ENCODE measurements at regions of chr1 and their contacts with region 1.

Region 1: DNA sequence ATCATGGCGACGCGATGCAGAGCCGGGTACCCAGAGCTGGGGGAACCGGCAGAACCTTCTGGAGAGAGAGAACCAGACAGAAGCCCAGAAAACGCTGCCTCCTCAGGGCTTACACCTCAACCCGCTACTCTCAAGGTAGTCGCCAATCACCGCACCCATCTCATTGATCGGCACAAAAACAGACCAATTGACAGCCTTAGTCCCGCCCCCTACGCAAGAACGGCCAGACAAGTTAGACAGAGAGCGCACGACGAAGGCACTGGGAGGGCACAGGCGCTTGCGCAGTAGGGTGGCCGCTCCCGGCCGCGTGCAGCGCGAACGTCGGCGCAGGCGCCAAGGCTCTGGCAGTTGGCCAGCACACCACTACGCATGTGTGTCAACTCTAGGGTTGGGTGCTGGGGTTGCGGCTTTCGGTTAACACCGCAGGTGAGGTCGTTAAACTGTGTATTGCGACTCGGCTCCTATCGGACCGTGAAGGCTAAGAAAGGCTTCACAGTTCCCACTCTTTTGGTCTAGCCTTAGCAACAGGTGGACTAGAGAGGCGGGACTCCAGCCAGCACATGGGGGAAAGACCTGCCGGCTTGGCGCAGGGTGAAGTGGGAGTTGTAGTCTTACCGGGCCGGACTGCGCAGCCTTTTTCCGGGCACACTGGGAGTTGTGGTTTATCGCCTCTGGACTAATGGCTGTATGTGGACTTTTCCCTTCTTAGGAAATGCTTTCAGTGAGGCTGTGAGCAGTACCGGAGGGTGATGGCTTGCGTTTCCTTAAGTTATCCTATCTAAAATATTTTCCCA is at the starts of genes CCT3 and TSACC:
- DNase-seq: peak; percentile 99 to 100 (median 100)
- ATAC-seq: peak; percentile 97
- H3K4me3 ChIP-seq: peak within 1 kb of the TSS; percentile 83
- H3K4me3 Mint-ChIP-seq: peak within 1 kb of the TSS; percentile 97 to 99 (median 99)
- H3K27ac ChIP-seq: peak within 1 kb of the TSS; percentile 76
- H3K27ac Mint-ChIP-seq: peak within 1 kb of the TSS; percentile 97 to 99 (median 98)
- H3K4me1 ChIP-seq: peaks cover 11 to 17% of the 10 kb centered on the region in 2 donors
- H3K4me1 Mint-ChIP-seq: peaks cover 16 to 49% (median 40%) of the 10 kb centered on the region in 7 donors
- H3K27me3 ChIP-seq: no peaks in the 10 kb centered on the region
- H3K27me3 Mint-ChIP-seq: peaks cover 0 to 12% (median 0%) of the 10 kb centered on the region in 5 donors
- total RNA-seq, gene CCT3: 78.0 to 282 (median 114) TPM
- total RNA-seq, gene TSACC: 1.1 TPM in 1 of 5 experiments, not detected in the others

Region 2: DNA sequence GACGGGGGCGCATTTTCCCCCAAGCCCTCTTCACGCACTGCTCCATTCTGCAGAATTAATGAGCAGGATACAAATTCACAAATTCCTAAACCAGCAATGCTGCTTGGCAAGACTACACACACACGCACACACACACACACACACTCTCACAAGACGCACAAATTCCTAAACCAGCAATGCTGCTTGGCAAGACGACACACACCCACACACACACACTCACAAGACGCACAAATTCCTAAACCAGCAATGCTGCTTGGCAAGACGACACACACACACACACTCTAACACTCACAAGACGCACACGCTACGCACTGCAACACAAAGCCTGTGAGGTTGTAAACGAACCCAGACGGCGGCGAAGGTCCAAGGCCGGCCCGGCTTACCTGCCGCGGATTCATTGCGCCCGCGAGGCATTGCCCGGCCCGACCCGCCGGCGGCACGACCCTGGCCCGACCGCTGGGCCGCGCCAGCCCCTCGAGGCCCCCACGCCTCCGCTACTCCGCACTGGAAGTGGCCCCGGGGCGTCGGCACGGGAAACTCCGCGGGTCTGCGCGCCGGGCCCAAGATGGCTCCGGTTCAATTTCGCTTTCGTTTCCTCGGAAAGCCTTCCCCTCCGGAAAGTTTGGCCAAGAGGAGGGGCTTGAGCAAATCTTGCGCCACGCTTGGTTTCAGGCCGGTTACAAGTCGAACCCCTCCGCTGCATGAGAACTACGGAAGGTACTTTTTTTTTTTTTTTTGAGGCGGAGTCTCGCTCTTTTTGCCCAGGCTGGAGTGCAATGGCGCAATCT is 1730.6 kb before region 1 on chr1 and contains the start of gene ADAR:
- CTCF ChIA-PET with region 1: no interaction called
- POLR2A ChIA-PET with region 1: no interaction called
- intact Hi-C with region 1: loop called in 1 of 2 experiments (anchors 2 kb)
- DNase-seq: peak; percentile 67 to 95 (median 90)
- ATAC-seq: peak; percentile 92
- H3K4me3 ChIP-seq: peak within 1 kb of the TSS; percentile 78
- H3K4me3 Mint-ChIP-seq: peak within 1 kb of the TSS; percentile 91 to 100 (median 98)
- H3K27ac ChIP-seq: peak within 1 kb of the TSS; percentile 97
- H3K27ac Mint-ChIP-seq: peak within 1 kb of the TSS; percentile 94 to 99 (median 99)
- H3K4me1 ChIP-seq: peaks cover 40 to 42% of the 10 kb centered on the region in 2 donors
- H3K4me1 Mint-ChIP-seq: peaks cover 63 to 90% (median 75%) of the 10 kb centered on the region in 7 donors
- H3K27me3 ChIP-seq: no peaks in the 10 kb centered on the region
- H3K27me3 Mint-ChIP-seq: no peaks in the 10 kb centered on the region
- total RNA-seq, gene ADAR: 206 to 408 (median 237) TPM

Region 3: GRCh38 chr1:156082309-156083091 is 255.9 kb before region 1 on chr1 and contains the start of gene MEX3A:
- CTCF ChIA-PET with region 1: no interaction called
- POLR2A ChIA-PET with region 1: no interaction called
- intact Hi-C with region 1: loop called in 1 of 2 experiments (anchors 1 kb)
- DNase-seq: peak; percentile 35 to 70 (median 52)
- ATAC-seq: peak; percentile 90
- H3K4me3 ChIP-seq: peak within 1 kb of the TSS; percentile 83
- H3K4me3 Mint-ChIP-seq: peak within 1 kb of the TSS; percentile 73 to 91 (median 85)
- H3K27ac ChIP-seq: peak within 1 kb of the TSS; percentile 15
- H3K27ac Mint-ChIP-seq: peak within 1 kb of the TSS in 4 of 9 donors; percentile 8 to 54 (median 31)
- H3K4me1 ChIP-seq: peaks cover 3 to 5% of the 10 kb centered on the region in 2 donors
- H3K4me1 Mint-ChIP-seq: peaks cover 0 to 17% (median 6%) of the 10 kb centered on the region in 7 donors
- H3K27me3 ChIP-seq: peaks cover 3 to 9% of the 10 kb centered on the region in 2 donors
- H3K27me3 Mint-ChIP-seq: peaks cover 26 to 89% (median 29%) of the 10 kb centered on the region in 5 donors
- total RNA-seq, gene MEX3A: 0.05 to 0.15 (median 0.13) TPM in 4 of 5 experiments, not detected in the other

Region 4: GRCh38 chr1:156282479-156283222 is 55.7 kb before region 1 on chr1 and contains the start of gene SMG5:
- CTCF ChIA-PET with region 1: interaction called, 3 read pairs
- POLR2A ChIA-PET with region 1: interaction called, 5 read pairs
- intact Hi-C with region 1: loop called (anchors 1 to 2 kb)
- DNase-seq: peak; percentile 89 to 98 (median 96)
- ATAC-seq: peak; percentile 95
- H3K4me3 ChIP-seq: peak within 1 kb of the TSS; percentile 93
- H3K4me3 Mint-ChIP-seq: peak within 1 kb of the TSS; percentile 85 to 99 (median 94)
- H3K27ac ChIP-seq: peak within 1 kb of the TSS; percentile 89
- H3K27ac Mint-ChIP-seq: peak within 1 kb of the TSS; percentile 89 to 98 (median 95)
- H3K4me1 ChIP-seq: peaks cover 15 to 22% of the 10 kb centered on the region in 2 donors
- H3K4me1 Mint-ChIP-seq: peaks cover 29 to 51% (median 39%) of the 10 kb centered on the region in 7 donors
- H3K27me3 ChIP-seq: no peaks in the 10 kb centered on the region
- H3K27me3 Mint-ChIP-seq: peaks cover 0 to 3% (median 0%) of the 10 kb centered on the region in 5 donors
- total RNA-seq, gene SMG5: 65.7 to 74.0 (median 69.4) TPM

Region 5: DNA sequence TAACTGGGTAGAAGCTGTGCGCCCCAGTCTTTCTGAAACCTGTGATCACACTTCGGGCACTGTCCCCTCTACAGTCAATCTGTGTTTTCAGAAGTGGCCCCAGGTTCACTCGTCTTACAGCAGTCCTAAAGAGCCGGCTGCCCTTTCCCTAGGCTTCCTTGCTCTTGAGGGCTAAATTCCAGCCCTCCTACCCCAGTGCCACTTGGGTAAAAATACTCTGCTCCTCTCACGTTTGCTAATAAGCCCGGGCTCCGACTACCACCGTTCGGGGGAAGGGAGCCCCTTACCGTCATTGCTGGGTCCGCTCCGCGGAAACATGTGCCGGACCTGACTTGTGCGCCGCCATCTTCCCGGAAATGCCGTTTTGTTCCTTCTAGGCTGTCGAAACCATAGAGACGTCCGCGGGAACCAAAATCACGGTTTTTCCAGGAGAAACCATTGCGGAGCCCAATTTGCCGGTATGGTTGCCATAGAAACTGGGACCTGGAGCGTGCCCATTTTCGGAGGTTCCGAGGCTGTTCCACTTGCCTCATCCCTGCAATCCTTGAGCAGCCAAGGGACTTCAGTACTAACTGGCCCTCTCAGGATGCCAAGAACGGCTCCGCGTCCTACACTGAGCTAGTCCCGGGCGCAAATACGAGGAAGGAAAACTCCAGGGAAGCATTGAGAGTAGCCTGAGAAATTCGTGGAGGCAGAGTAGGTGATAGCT is 262.9 kb after region 1 on chr1 and contains the start of gene GPATCH4:
- CTCF ChIA-PET with region 1: no interaction called
- POLR2A ChIA-PET with region 1: no interaction called
- intact Hi-C with region 1: loop called in 1 of 2 experiments (anchors 1 kb)
- DNase-seq: peak; percentile 49 to 79 (median 74)
- ATAC-seq: peak; percentile 88
- H3K4me3 ChIP-seq: peak within 1 kb of the TSS; percentile 68
- H3K4me3 Mint-ChIP-seq: peak within 1 kb of the TSS; percentile 90 to 100 (median 93)
- H3K27ac ChIP-seq: peak within 1 kb of the TSS; percentile 86
- H3K27ac Mint-ChIP-seq: peak within 1 kb of the TSS; percentile 92 to 99 (median 94)
- H3K4me1 ChIP-seq: peaks cover 9 to 19% of the 10 kb centered on the region in 2 donors
- H3K4me1 Mint-ChIP-seq: peaks cover 24 to 41% (median 36%) of the 10 kb centered on the region in 7 donors
- H3K27me3 ChIP-seq: no peaks in the 10 kb centered on the region
- H3K27me3 Mint-ChIP-seq: no peaks in the 10 kb centered on the region
- total RNA-seq, gene GPATCH4: 33.3 to 49.6 (median 39.1) TPM

Region 6: GRCh38 chr1:156751758-156752757 is 413.7 kb after region 1 on chr1:
- CTCF ChIA-PET with region 1: no interaction called
- POLR2A ChIA-PET with region 1: no interaction called
- intact Hi-C with region 1: loop called in 1 of 2 experiments (anchors 1 kb)
- DNase-seq: peak; percentile 83 to 98 (median 92)
- ATAC-seq: peak; percentile 96
- H3K4me3 ChIP-seq: peak overlapping the region; percentile 93
- H3K4me3 Mint-ChIP-seq: peak overlapping the region; percentile 88 to 98 (median 92)
- H3K27ac ChIP-seq: peak overlapping the region; percentile 90
- H3K27ac Mint-ChIP-seq: peak overlapping the region; percentile 82 to 96 (median 90)
- H3K4me1 ChIP-seq: peaks cover 36 to 38% of the 10 kb centered on the region in 2 donors
- H3K4me1 Mint-ChIP-seq: peaks cover 38 to 57% (median 45%) of the 10 kb centered on the region in 7 donors
- H3K27me3 ChIP-seq: no peaks in the 10 kb centered on the region
- H3K27me3 Mint-ChIP-seq: no peaks in the 10 kb centered on the region